Dorsolateral prefrontal cortex (tissue), 120 donors: ENCODE measurements at regions of chr7 and their contacts with region 1.

Region 1: DNA sequence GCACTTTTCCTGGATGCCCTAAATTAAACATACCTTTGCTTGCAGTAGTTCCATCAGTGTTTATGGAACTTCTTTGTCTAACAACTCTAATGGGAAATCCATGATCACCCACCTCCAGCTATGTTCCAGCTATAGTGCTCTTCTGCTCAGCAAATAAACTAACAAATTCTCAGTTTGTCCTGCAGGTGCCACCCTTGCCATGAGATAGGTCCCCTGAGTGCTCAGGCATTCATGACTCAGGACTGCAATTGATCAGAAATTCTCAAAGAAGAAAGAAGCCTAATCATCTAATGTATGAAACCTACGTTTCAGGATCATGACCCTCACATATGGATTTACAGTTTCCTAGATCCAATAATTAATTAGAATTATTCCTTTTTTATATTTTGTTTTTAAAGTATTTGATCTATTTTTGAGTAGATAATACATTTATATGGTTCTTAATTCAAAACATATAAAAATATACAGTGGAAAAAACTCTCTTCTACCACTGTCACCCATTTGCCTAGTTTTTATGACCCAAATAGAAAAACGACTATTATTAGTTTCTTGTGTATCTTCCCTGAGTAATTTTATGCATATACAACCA is 48.7 kb upstream of the DYNC1I1 start:
- DNase-seq: peak in 4 of 10 donors; percentile 14 to 62 (median 42)
- H3K4me3 ChIP-seq: no peak overlapping the region
- H3K27ac ChIP-seq: no peak overlapping the region
- H3K27me3 ChIP-seq: no peaks in the 10 kb centered on the region
- CTCF ChIP-seq: peak in 55 of 56 donors; percentile 34 to 81 (median 64)

Region 2: DNA sequence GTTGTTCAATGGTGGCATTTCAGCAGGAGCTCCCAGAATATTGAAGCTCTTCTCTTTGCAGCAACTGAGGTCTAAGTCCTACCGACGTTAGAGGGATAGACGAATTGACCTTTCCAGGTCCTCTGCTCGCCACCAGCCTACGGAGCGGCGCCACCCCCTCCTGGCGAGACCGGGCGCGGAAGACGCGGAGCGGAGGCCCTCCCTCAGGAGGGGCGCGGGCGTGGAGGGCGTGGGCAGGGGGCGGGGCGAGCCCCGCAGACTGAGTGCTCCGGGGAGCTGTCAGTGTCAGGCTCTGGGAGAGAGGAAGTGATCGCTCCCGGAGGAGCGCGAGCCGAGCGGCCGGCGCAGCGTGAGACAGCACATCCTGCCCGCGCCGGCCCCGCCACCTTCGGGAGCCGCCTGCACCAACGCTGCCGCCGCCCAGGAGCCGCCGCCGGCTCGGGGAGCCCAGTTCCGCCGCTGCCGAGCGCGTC is 48.6 kb after region 1 on chr7 and contains the start of gene DYNC1I1:
- intact Hi-C with region 1: loop called in 1 of 2 experiments (anchors 5 kb)
- DNase-seq: peak; percentile 55 to 88 (median 72)
- H3K4me3 ChIP-seq: peak within 1 kb of the TSS; percentile 51 to 94 (median 83)
- H3K27ac ChIP-seq: peak within 1 kb of the TSS in 57 of 59 donors; percentile 11 to 93 (median 81)
- H3K27me3 ChIP-seq: no peaks in the 10 kb centered on the region
- CTCF ChIP-seq: peak in 26 of 56 donors; percentile 10 to 51 (median 24)
- total RNA-seq, gene DYNC1I1: 56.7 to 187 (median 137) TPM

Region 3: GRCh38 chr7:95784796-95785195 is 61.1 kb after region 1 on chr7:
- intact Hi-C with region 1: no loop called
- DNase-seq: no peak
- H3K4me3 ChIP-seq: no peak overlapping the region
- H3K27ac ChIP-seq: no peak overlapping the region
- H3K27me3 ChIP-seq: no peaks in the 10 kb centered on the region
- CTCF ChIP-seq: no peak

Region 4: DNA sequence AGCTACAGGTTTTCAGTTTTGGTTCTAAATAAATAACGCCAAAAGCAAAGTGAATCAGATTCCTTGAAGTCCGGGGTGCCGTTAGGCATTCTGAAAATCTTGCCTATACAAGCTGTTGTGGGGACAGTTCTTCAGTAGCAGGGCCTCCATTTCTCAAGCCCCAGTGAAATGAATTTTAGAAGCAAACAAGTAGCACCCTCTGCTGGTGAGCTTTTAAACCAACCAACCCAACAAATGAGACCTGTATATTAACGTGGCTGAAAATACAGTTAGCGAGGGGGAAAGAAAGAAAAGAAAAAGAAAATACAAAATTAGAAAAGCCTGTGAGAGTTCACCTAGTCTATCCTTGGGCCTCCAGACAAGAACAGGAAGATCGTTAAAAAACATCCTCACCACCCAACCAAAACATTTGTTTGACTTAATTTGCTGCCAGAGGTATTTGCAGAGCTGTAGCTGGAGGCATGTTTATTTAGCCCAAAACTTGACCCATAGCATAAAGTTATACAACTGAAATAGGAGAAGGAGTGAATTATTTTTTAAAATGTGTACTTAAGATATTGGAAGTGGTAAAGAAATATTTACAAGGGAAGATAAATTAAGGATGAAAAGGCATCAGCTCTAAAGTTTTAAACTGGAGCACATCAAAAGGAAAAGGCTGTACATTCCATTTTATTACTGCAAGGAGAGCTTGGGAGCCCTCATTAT is 147.5 kb after region 1 on chr7:
- intact Hi-C with region 1: loop called (anchors 1 to 10 kb)
- DNase-seq: peak in 4 of 10 donors; percentile 10 to 61 (median 41)
- H3K4me3 ChIP-seq: no peak overlapping the region
- H3K27ac ChIP-seq: no peak overlapping the region
- H3K27me3 ChIP-seq: no peaks in the 10 kb centered on the region
- CTCF ChIP-seq: peak; percentile 57 to 90 (median 76)